ENCODE measurements at regions of chr6 and their contacts with region 1.

Region 1: DNA sequence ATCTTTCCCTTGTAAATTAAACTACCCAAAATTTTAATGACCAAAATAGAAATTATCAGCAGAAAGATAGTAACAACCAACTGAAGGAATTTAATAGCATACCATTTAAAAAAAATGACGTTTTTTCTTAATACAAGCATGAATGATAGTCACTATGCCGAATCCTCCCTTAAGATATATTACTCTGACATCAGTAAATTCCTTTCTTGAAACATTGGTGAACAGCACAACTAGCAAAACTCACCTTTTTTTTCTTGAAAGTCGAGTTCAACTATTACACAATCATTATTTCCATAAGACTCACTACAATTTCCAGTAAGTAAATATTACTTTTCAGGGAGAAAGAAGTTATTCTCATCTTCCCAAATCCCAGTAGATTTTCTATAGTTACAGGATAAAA is 433.2 kb downstream of the GRIK2 start:
- DNase-seq: no peak
- H3K4me3 ChIP-seq: no peak overlapping the region
- H3K27ac ChIP-seq: no peak overlapping the region
- H3K4me1 ChIP-seq: no peaks in the 10 kb centered on the region
- H3K27me3 ChIP-seq: no peaks in the 10 kb centered on the region
- CTCF ChIP-seq: no peak
- POLR2A ChIP-seq: no peak

Region 2: GRCh38 chr6:101806241-101806640 is 20.4 kb before region 1 on chr6:
- intact Hi-C with region 1: loop called (anchors 2 kb)
- DNase-seq: no peak
- H3K4me3 ChIP-seq: no peak overlapping the region
- H3K27ac ChIP-seq: no peak overlapping the region
- H3K4me1 ChIP-seq: no peaks in the 10 kb centered on the region
- H3K27me3 ChIP-seq: no peaks in the 10 kb centered on the region
- CTCF ChIP-seq: no peak
- POLR2A ChIP-seq: no peak

Region 3: DNA sequence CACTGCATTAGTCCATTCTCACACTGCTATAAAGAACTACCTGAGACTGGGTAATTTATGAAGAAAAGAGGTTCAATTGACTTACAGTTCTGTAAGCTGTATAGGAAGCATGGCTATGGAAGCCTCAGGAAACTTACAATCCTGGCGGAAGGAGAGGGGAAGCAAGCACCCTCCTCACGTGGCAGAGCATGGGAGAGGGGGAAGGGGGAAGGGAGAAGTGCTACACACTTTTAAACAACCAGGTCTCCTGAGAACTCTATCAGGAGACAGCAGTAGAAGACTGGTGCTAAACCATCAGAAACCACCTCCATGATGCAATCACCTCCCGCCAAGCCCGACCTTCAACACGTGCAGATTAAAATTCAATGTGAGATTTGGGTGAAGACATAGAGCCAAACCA is 60.9 kb after region 1 on chr6:
- intact Hi-C with region 1: no loop called
- DNase-seq: no peak
- H3K4me3 ChIP-seq: no peak overlapping the region
- H3K27ac ChIP-seq: no peak overlapping the region
- H3K4me1 ChIP-seq: no peaks in the 10 kb centered on the region
- H3K27me3 ChIP-seq: no peaks in the 10 kb centered on the region
- CTCF ChIP-seq: no peak
- POLR2A ChIP-seq: no peak